ENCODE measurements at regions of chr11 and their contacts with region 1.

Region 1: GRCh38 chr11:14300661-14301304 is 58.2 kb downstream of the RRAS2 start:
- DNase-seq: peak; percentile 66
- H3K4me3 Mint-ChIP-seq: no peak overlapping the region
- H3K27ac Mint-ChIP-seq: no peak overlapping the region
- H3K4me1 Mint-ChIP-seq: peaks cover 2% of the 10 kb centered on the region
- H3K27me3 Mint-ChIP-seq: no peaks in the 10 kb centered on the region

Region 2: GRCh38 chr11:13908535-13908934 is 392.2 kb before region 1 on chr11:
- CTCF ChIA-PET with region 1: no interaction called
- POLR2A ChIA-PET with region 1: no interaction called
- intact Hi-C with region 1: no loop called
- DNase-seq: no peak
- H3K4me3 Mint-ChIP-seq: no peak overlapping the region
- H3K27ac Mint-ChIP-seq: no peak overlapping the region
- H3K4me1 Mint-ChIP-seq: no peaks in the 10 kb centered on the region
- H3K27me3 Mint-ChIP-seq: no peaks in the 10 kb centered on the region

Region 3: DNA sequence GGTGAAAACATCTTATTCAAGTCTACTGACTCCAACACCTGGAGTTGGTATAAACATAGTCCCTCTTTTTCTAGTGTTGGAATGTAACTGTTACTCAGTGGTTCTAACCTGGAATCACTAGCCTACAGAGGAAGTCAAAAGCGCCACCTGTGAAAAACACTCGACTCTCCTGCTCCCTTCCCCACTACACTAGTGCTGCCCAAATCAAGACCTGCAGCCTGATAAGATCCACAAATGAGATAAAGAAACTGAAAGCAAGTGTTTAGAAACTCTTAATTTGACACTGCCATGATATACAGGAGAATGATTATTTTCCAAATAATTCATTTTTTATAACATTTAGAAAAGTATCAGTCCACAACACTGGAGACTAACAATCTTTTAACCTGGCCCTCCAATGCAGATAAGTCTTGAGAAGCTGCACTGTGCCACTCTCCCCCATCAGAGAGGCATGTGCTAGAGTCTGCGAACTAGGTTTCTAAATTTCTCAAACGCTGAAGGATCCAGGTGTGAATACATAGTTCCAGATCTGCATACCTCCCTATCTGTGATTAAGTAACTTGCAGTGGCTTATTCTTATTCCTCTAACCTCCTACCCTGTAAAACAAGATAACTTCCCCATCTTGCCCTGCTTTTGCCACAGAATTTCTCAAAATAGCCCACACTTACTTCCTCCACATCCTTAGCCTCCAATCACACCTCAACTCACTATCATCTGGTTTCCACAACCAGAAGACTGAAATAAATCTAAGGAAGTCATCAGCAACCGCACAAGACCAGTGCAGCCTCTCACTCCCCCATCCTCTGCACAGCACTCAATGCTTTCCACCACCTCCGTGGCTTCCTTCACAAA is 29.9 kb before region 1 on chr11:
- CTCF ChIA-PET with region 1: no interaction called
- POLR2A ChIA-PET with region 1: no interaction called
- intact Hi-C with region 1: no loop called
- DNase-seq: peak; percentile 43
- H3K4me3 Mint-ChIP-seq: peak overlapping the region; percentile 13
- H3K27ac Mint-ChIP-seq: peak overlapping the region; percentile 30
- H3K4me1 Mint-ChIP-seq: peaks cover 27% of the 10 kb centered on the region
- H3K27me3 Mint-ChIP-seq: no peaks in the 10 kb centered on the region

Region 4: GRCh38 chr11:14418803-14419417 is 118.1 kb after region 1 on chr11:
- CTCF ChIA-PET with region 1: interaction called, 26 read pairs
- POLR2A ChIA-PET with region 1: no interaction called
- intact Hi-C with region 1: loop called (anchors 1 kb)
- DNase-seq: no peak
- H3K4me3 Mint-ChIP-seq: no peak overlapping the region
- H3K27ac Mint-ChIP-seq: no peak overlapping the region
- H3K4me1 Mint-ChIP-seq: peaks cover 24% of the 10 kb centered on the region
- H3K27me3 Mint-ChIP-seq: no peaks in the 10 kb centered on the region

Measured in activated CD4-positive, alpha-beta memory T cell treated with anti-CD3 and anti-CD28 coated beads for 36 hours (primary cell).